AG04449 (cell line): ENCODE measurements at regions of chr17 and their contacts with region 1.

Region 1: DNA sequence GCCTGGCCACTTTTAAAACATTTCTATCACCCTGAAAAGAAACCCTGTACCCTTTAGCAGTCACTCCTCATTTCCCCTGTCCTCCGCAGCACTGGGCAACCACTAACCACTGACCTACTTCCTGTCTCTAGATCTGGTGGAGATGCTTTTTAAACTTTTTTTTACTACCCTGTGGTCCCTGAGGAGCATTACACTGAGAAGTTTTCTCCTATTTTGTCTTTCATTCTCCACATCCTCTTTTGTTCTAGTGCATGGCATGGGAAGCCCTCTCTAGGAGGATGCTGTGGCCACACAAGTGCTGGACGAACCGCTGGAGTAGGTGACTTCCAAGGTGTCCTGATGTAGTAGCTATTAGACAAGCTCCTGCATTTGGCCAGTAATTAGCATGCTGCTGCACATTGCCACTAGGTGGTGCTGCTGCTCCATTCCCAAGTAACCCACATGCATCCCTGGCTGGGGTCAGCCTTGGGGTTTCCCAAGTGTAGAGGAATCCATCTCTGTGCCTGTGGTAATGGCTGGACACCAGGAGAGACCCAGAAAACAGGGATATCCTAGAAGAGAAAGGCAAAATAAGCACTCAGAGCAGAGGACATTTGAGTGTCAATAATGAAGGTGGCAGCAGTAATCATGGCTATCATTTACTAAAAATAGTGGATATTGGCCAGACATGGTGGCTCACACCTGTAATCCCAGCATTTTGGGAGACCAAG is 143.8 kb upstream of the CRHR1 start:
- DNase-seq: peak; percentile 3
- H3K4me3 ChIP-seq: no peak overlapping the region
- CTCF ChIP-seq: peak; percentile 92

Region 2: DNA sequence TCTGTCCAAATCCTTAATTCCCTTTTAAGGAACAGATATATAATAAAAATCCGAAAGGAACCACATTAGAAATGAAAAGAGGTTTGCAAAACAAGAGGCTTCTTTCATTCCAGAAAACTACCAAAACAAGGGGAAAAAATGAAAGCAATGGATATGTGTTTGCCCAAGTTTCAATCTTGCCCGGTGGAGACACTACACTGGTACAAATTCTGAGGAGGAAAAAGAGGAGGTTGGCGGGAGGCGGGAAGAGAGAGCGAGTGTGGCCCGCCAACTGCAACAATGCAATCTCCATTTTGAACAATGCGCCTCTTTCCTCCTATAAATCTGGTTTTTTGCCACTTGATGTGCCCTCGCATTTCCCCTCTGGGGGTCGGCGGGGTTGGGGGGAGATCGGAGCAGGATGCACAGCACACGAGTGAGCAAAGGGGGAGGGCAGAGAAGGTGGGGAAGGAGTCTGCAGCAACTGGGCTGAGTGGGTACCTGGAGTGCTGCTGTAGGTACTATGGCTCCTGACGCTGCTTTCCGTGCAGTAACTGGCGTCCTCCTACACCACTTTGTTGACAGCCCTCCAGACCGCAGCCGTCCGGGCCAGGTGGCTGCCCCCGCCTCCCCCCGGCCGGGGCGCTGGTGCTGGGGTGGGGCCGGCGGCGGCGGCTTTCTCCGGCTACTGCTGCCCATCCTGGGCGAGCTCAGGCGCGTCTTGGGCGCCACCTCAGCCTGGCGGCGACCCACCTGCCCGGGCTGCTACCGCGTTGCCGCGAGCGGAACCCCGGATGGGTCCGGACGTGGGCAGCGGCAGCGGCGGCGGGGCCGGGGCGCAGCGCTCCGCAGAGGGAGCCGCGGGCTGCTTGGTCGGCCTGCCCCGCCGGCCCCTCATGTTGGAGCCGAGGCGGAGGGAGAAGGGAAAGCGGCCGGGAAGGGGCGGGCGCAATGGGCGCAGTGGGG is 55.9 kb before region 1 on chr17:
- CTCF ChIA-PET with region 1: no interaction called
- POLR2A ChIA-PET with region 1: no interaction called
- DNase-seq: no peak
- H3K4me3 ChIP-seq: peak overlapping the region; percentile 96
- CTCF ChIP-seq: no peak

Region 3: GRCh38 chr17:45628019-45628418 is 12.3 kb before region 1 on chr17:
- CTCF ChIA-PET with region 1: interaction called, 30 read pairs
- POLR2A ChIA-PET with region 1: no interaction called
- DNase-seq: no peak
- H3K4me3 ChIP-seq: no peak overlapping the region
- CTCF ChIP-seq: no peak

Region 4: GRCh38 chr17:45841883-45842525 is 201.7 kb after region 1 on chr17:
- CTCF ChIA-PET with region 1: interaction called, 260 read pairs
- POLR2A ChIA-PET with region 1: no interaction called
- DNase-seq: no peak
- H3K4me3 ChIP-seq: no peak overlapping the region
- CTCF ChIP-seq: no peak